ENCODE measurements at regions of chr22 and their contacts with region 1.

Region 1: DNA sequence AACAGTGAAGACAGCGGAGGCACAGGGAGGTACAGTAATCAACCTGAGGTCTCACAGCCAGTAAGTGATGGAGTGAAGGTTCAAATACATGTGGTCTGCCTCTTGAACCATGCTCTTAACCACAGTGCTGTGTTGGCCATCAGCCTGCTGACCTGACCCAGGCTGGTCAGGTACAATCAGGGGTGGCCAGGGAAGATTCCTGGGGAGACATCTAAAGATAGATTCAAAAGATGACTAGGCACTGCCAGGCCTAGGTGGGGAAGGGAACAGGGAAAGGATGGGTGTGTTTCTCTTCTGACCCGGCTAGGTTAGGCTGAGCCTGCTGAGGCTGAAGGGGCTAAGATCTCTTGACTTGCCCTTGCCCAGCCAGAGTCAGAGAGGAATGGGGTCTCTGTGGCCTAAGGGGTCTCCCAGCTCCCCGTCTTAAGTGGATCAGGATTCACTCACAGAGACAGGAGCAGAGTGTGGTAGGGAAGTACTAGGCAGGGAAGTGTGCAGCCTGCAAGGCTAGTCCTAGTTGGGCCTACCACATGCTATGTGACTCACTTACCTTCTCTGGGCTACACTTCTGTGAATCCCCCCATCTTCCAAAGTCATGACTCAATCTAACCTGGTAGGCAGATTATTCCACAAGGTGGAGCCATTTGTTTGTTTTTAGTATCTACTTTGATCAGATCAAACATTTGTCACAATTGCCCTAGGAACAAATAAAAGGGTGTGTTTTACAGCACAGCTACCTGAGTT is 10.4 kb upstream of the SREBF2 start:
- DNase-seq: peak; percentile 91
- ATAC-seq: peak; percentile 93
- H3K4me3 ChIP-seq: no peak overlapping the region
- H3K27ac ChIP-seq: peak overlapping the region; percentile 75
- H3K4me1 ChIP-seq: peaks cover 13% of the 10 kb centered on the region
- H3K27me3 ChIP-seq: no peaks in the 10 kb centered on the region
- CTCF ChIP-seq: peak; percentile 72

Region 2: GRCh38 chr22:41857155-41857859 is 34.8 kb after region 1 on chr22:
- CTCF ChIA-PET with region 1: interaction called, 4 read pairs
- POLR2A ChIA-PET with region 1: no interaction called
- intact Hi-C with region 1: loop called (anchors 1 kb)
- DNase-seq: peak; percentile 87
- ATAC-seq: peak; percentile 92
- H3K4me3 ChIP-seq: no peak overlapping the region
- H3K27ac ChIP-seq: peak overlapping the region; percentile 62
- H3K4me1 ChIP-seq: peaks cover 27% of the 10 kb centered on the region
- H3K27me3 ChIP-seq: no peaks in the 10 kb centered on the region
- CTCF ChIP-seq: peak; percentile 77

Region 3: DNA sequence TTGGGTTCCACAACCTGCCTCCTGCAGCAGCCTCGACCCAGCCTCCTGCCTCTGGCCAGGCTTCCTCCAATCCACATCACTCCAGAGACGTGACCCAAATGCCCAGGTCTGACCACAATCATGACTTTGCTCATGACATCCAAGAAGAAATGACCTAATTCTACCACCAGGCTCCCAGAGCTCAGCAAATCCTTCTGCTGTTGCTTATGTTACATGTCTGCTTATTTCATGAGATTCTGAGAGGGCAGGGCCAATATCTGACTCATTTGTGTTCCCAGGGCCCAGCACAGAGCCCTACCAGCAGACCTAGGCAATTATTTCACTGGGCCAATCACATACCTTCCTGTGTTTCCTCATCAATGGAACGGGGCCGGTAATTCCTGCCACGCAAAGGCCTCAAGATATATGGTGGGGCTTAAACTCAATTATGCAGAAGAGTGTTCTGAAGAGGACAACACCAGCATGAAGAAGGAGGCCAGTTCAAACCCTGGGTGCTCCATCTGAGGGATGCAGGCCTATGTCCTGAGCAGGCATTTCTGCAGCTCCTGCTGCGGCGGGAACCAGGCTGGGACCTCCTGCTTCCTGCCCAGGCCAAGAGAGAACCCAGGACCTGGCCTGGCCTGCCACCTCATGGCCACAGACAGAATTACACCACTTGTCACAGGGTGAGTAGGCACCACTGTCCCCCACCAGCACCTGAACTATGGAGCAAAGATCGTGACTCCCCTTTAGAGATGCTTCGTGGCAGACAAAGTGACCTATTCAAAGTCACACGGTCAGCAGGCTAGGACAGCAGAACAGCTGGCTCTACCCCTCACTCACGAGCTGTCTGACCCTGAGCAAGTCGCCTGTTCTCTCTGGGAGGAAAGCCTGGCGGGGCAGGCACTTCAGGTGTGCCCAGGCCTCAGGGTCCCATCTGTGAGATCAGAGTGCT is 118.6 kb after region 1 on chr22:
- CTCF ChIA-PET with region 1: interaction called, 3 read pairs
- POLR2A ChIA-PET with region 1: no interaction called
- intact Hi-C with region 1: loop called (anchors 1 kb)
- DNase-seq: peak; percentile 67
- ATAC-seq: peak; percentile 76
- H3K4me3 ChIP-seq: no peak overlapping the region
- H3K27ac ChIP-seq: peak overlapping the region; percentile 31; the same call in 1 of the 2 replicates
- H3K4me1 ChIP-seq: peaks cover 11% of the 10 kb centered on the region
- H3K27me3 ChIP-seq: no peaks in the 10 kb centered on the region
- CTCF ChIP-seq: peak; percentile 75